ENCODE measurements at regions of chr6 and their contacts with region 1.

Region 1: DNA sequence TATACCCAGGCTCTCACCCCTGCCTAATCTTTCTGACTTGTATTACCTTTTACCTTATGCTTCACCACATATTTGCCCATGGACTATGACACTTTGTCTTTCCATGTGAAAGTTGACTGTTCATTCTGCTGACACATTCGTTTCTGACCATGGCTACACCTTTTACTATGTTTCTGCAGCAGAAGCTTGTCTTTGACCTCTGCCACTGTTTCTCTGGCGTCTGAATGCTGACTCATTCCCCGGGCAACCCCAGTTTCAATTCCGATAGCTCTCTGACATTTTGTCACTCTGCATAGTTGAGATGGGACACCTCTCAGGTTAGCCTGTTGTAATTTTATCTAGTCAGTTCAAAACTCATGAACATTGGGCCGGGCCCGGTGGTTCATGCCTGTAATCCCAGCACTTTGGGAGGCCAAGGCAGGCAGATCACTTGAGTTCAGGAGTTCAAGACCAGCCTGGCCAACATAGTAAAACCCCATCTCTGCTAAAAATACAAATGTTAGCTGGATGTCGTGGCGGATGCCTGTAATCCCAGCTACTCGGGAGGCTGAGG is 50.7 kb downstream of the SLC26A8 start:
- DNase-seq: no peak
- ATAC-seq: no peak
- H3K4me3 Mint-ChIP-seq: no peak overlapping the region
- H3K27ac Mint-ChIP-seq: peak overlapping the region; percentile 32; the same call in 1 of the 2 replicates
- H3K4me1 Mint-ChIP-seq: no peaks in the 10 kb centered on the region
- H3K27me3 Mint-ChIP-seq: no peaks in the 10 kb centered on the region
- CTCF ChIP-seq: no peak

Region 2: GRCh38 chr6:36263390-36264000 is 289.7 kb after region 1 on chr6:
- CTCF ChIA-PET with region 1: no interaction called
- POLR2A ChIA-PET with region 1: interaction called, 15 read pairs
- DNase-seq: no peak
- ATAC-seq: no peak
- H3K4me3 Mint-ChIP-seq: no peak overlapping the region
- H3K27ac Mint-ChIP-seq: no peak overlapping the region
- H3K4me1 Mint-ChIP-seq: peaks cover 8% of the 10 kb centered on the region
- H3K27me3 Mint-ChIP-seq: peaks cover 3% of the 10 kb centered on the region; the same call in 1 of the 2 replicates
- CTCF ChIP-seq: no peak

Measured in WTC11 (cell line).